Left cardiac atrium (tissue), 4 donors: ENCODE measurements at regions of chr9 and their contacts with region 1.

Region 1: DNA sequence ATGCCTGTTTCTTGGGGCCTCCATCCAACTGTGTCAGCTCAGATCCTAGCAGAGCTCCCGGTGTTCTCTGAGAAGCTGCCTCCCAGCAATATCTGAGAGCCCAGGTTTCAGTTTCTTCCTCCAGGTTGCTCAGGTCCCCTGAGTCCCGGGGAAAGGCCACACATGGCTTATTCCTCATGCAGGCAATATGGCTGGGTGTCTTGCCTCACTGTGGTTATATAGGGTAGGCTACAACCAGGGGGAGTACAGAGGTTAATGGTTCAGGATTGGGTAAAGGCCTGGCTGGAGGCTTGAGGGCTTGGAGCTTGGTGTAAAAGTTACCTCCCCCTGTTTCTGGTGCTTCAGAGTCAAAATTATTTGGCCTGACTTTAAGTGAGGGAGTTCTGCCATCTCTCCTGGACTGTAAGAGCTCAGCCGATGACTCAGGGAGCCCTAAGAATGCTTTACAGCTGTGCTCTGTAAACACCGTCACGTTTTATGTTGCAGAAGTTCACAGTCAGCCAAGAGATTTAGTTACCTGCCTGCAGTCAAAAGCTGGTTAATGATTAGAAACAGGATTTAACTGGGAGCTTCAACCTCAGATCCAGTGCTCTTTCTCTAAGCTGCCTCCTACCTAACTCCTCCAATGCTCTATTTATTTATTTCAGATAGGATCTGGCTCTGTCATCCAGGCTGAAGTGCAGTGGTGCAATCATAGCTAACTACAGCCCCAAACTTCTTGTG is 24.3 kb upstream of the UBAP2 start:
- DNase-seq: no peak
- ATAC-seq: peak; percentile 34 to 93

Region 2: GRCh38 chr9:33924978-33925797 is 147.8 kb before region 1 on chr9:
- intact Hi-C with region 1: loop called (anchors 10 kb)
- DNase-seq: no peak
- ATAC-seq: peak; percentile 51 to 57

Region 3: GRCh38 chr9:34010979-34011378 is 62.0 kb before region 1 on chr9:
- intact Hi-C with region 1: loop called in 1 of 2 experiments (anchors 5 kb)
- DNase-seq: no peak
- ATAC-seq: no peak